Upper lobe of right lung (tissue), 1 donor: ENCODE measurements at regions of chr15 and their contacts with region 1.

Region 1: DNA sequence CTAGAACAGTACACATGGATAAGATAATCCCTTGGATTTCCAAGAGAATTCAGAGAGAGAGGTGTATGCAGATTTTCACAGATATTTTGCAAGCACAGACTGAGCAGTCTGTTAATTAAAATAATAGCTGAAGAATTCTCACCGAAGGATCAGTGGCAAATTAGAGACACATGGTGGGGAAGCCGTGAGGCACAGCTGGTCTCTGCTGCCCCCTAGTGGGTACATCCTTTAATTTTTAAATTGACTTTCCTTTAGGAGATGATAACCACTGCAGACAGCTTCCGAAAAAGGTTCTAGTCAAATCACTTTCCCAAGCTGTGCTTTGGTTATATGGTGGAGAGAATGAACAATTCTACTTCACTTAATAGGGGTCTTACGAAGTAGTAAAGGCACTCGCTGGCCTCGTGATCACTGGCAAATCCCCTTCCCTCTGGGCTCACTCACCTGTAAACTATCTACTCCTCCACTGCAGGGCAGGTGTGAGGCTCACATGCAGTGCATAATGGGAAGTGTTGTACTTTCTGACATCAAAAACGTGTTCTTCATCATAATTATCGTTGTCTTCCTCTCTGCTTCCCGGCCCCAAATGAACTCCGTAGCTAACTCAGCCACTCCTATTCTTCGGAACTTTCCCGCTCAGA is 19.5 kb downstream of the MESD start:
- DNase-seq: no peak
- ATAC-seq: peak; percentile 89
- H3K4me3 ChIP-seq: no peak overlapping the region
- H3K27ac ChIP-seq: no peak overlapping the region
- H3K4me1 ChIP-seq: no peaks in the 10 kb centered on the region
- H3K27me3 ChIP-seq: no peaks in the 10 kb centered on the region
- CTCF ChIP-seq: peak; percentile 84

Region 2: DNA sequence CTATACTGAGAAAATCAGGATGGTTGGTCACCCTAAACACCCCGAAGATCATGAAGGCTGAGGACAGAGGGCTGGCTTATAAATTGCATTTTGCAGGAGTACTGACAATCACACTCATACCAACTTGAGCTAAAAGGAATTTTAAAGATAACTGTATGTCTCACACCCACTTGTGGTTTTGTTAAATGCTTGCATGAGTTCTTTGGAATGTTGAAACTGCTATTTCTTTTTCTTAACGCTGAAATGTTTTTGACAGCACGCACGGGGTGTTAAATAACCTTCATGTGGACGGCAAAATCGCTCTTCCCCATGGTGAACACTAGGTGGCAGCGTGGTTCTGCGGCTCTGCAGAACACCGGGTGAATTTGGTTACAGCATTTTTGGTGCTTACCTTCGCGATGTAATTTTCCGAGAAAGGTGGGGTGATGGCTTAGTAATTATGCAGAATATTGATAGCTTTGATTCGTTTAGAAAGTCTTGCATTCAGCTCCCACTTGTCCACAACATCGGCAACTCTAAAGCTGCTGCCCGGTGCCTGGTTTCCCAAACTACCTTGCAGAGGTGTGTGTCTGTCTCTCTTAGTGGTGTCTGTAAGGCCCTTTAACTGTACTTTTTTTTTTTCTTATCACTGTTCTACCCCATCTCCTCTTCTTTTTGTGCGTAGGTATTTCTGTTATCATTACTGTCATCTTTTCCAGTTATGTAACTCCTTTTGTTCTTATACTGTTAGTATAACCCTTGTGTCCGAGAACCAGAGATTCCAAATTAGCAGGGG is 514.3 kb before region 1 on chr15:
- intact Hi-C with region 1: loop called (anchors 10 kb)
- DNase-seq: no peak
- ATAC-seq: peak; percentile 91
- H3K4me3 ChIP-seq: no peak overlapping the region
- H3K27ac ChIP-seq: no peak overlapping the region
- H3K4me1 ChIP-seq: peaks cover 29% of the 10 kb centered on the region
- H3K27me3 ChIP-seq: no peaks in the 10 kb centered on the region
- CTCF ChIP-seq: peak; percentile 95

Region 3: GRCh38 chr15:80811781-80812315 is 158.3 kb before region 1 on chr15:
- intact Hi-C with region 1: no loop called
- DNase-seq: no peak
- ATAC-seq: no peak
- H3K4me3 ChIP-seq: no peak overlapping the region
- H3K27ac ChIP-seq: no peak overlapping the region
- H3K4me1 ChIP-seq: no peaks in the 10 kb centered on the region
- H3K27me3 ChIP-seq: no peaks in the 10 kb centered on the region
- CTCF ChIP-seq: no peak

Region 4: GRCh38 chr15:80934761-80935221 is 35.3 kb before region 1 on chr15:
- intact Hi-C with region 1: no loop called
- DNase-seq: no peak
- ATAC-seq: no peak
- H3K4me3 ChIP-seq: no peak overlapping the region
- H3K27ac ChIP-seq: no peak overlapping the region
- H3K4me1 ChIP-seq: no peaks in the 10 kb centered on the region
- H3K27me3 ChIP-seq: no peaks in the 10 kb centered on the region
- CTCF ChIP-seq: no peak

Region 5: DNA sequence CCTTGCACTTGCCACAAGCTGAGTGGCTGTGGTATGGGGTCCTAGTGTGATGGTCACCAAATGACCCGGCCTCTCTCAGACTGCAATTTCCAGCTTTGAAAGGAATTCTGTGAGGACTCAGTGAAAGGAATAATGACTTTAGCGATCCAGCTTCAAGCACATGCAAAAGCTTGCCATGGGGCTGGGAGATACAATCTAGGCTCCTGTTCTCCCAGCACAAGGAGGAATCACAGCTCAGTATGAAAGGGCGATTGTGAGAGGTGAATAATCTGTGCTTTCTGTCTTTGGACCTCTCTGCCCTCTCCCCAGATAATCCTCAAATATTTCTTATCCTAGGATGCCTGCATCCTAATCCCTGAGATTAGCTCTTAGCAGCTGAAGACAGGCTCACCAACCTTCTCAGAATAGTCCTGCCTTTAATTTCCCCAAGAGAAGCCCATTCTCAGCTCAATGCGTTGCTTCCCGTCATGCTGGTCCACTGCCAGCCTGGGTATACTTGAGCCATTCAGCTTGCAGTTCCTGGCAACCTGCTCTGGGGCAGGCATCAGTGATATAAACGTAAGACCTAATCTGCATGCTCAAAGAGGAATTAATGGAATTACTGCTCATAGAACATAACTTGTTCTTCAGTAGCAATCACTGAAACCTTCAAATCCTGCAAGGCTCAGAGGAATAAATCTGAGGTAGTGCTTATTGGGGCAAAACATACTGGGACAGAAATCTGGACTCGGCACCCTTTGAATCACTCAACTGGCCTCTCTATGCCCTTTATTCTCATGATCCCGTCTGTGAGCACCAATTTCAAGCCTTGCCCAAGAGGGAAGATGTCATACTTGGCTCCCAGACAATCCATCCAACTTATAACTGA is 45.7 kb after region 1 on chr15:
- intact Hi-C with region 1: no loop called
- DNase-seq: no peak
- ATAC-seq: no peak
- H3K4me3 ChIP-seq: no peak overlapping the region
- H3K27ac ChIP-seq: no peak overlapping the region
- H3K4me1 ChIP-seq: peaks cover 14% of the 10 kb centered on the region
- H3K27me3 ChIP-seq: no peaks in the 10 kb centered on the region
- CTCF ChIP-seq: no peak